A673 (cell line): ENCODE measurements at regions of chr6 and their contacts with region 1.

Region 1: DNA sequence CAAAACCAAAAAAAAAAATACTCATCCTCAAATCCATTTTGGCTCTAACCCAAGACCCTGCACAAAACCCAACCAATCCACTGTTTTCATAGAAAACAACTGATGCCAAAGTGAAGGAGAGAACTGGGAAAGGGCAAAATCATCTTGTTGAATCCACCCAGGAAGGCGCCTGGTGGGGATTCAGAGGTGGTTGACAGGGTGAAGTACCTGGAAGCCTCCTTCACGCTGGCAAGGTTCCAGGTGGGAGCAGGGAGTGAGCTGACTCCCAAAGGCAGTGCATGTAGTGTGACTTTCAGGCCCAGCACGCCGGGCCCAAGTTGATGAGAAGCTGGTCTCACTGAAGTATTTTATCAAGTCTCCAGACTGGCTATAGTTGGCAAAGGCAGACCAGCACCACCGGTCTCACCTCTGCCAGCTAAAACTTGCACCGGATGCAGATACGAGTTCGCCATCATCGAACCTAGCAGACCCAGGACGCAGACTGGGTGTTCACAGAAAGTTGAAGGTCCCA is 16.5 kb downstream of the PPP1R10 start:
- DNase-seq: no peak
- H3K4me3 ChIP-seq: no peak overlapping the region
- H3K27ac ChIP-seq: no peak overlapping the region
- H3K4me1 ChIP-seq: no peaks in the 10 kb centered on the region
- H3K27me3 ChIP-seq: no peaks in the 10 kb centered on the region
- CTCF ChIP-seq: no peak

Region 2: GRCh38 chr6:30234356-30234755 is 366.1 kb before region 1 on chr6:
- CTCF ChIA-PET with region 1: no interaction called
- POLR2A ChIA-PET with region 1: no interaction called
- intact Hi-C with region 1: no loop called
- DNase-seq: peak; percentile 7
- H3K4me3 ChIP-seq: no peak overlapping the region
- H3K27ac ChIP-seq: no peak overlapping the region
- H3K4me1 ChIP-seq: no peaks in the 10 kb centered on the region
- H3K27me3 ChIP-seq: peaks cover 20% of the 10 kb centered on the region
- CTCF ChIP-seq: no peak

Region 3: DNA sequence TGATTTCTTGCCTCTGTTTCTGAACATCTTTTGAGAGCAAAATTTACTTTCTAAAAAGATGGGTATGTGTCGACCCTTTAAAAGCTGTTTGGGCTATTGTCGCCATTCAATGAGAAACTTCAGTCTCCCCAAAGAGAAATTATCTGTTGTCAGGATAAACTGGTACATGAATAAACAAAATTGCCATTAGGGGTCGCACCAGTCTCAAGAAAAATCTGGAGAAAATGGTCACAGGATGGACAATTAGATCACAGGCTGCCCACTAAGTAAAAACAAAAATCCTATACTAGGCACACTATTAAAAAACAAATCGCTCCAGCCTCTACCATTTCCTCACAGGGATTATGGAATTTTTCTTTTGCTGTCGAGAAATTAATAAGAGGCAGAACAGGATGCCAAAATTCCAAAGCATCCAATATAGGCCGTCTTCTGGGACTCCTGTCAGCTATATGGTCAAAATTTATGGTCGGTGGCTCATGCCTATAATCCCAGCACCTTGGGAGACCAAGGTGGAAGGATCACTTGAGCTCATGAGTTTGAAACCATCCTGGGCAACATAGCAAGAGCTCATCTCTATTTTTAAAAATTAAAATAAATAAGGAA is 116.7 kb before region 1 on chr6:
- CTCF ChIA-PET with region 1: interaction called, 8 read pairs
- POLR2A ChIA-PET with region 1: no interaction called
- intact Hi-C with region 1: loop called (anchors 1 kb)
- DNase-seq: peak; percentile 69
- H3K4me3 ChIP-seq: no peak overlapping the region
- H3K27ac ChIP-seq: no peak overlapping the region
- H3K4me1 ChIP-seq: peaks cover 13% of the 10 kb centered on the region
- H3K27me3 ChIP-seq: peaks cover 35% of the 10 kb centered on the region
- CTCF ChIP-seq: peak; percentile 67

Region 4: DNA sequence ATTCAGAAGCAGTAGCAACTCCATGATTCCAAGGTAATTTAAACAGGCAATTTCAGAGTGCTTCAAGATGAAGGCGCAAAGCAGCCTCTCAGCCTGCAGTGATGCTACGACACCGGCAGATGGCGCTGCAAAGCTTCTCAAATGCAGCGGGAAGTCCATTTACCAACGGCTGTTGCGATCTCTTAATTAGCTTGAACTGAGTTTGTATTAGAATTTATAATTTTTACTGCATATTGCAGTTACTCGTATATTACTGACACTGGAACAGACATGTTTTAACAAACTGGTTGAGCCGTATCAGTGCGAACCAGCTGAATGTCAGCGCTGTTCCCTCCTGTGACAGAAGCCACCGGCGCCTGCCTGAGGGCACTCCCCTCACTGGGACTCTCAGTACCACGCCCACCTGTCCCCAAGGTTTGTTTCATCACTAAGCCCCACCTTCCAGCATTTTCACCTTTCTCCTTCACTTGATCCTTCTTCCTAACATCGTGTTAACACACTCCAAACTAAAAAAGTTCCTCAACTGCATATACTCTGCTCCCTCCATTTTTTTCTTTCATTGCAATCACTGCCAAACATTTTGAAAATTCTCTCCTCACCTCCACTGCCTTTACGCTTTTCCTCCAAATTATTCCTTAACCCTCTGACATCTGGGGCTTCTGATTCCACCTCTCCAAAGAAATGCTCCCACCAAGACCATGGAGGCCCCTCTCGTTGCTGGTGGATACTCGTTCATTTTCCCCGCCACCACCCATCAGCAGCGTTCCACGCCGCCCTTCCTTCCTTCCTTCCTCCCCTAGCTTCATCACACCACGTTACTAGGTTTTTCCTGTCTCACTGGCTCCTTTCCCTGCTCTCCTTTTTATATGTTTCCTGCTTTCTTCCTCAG is 58.7 kb before region 1 on chr6:
- CTCF ChIA-PET with region 1: interaction called, 3 read pairs
- POLR2A ChIA-PET with region 1: interaction called, 3 read pairs
- intact Hi-C with region 1: loop called (anchors 5 kb)
- DNase-seq: peak; percentile 85
- H3K4me3 ChIP-seq: peak overlapping the region; percentile 32
- H3K27ac ChIP-seq: no peak overlapping the region
- H3K4me1 ChIP-seq: peaks cover 4% of the 10 kb centered on the region
- H3K27me3 ChIP-seq: no peaks in the 10 kb centered on the region
- CTCF ChIP-seq: peak; percentile 99

Region 5: DNA sequence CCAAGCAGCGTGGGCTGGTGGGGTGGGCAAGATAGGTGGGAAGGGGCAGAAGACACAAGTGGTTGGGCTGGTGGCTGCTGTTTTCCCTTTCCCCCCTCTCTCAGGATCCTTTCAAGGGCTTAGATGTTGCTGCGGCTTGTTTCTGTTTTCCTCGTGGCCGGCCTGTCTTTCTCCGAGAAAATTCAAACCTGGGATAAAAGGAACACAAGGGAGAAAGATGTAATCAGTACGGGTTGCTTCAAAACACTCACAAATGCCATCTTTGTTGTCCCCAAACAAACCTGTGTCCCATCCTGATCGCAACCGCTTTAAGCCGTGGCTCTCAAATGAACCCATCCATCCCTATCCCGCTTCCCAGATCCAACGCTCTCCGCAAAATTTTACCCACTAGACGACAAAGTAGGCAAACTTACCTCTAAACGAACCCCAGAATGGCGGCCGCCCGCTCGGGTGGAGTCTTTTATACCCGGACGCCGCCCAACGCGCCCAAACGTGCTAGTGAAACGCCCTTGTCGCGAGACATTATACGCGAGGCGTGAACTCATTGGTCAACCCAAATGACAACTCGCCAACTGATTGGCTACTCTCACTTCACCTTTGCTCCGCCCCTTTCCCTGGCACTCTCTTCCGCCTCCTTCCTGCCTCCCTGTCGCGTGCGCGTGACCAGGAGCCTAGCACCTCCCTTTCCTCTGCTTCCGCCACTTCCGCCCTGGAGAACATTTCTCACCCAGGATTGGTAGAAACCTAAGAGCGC is 16.5 kb after region 1 on chr6 and contains the start of gene PPP1R10:
- CTCF ChIA-PET with region 1: no interaction called
- POLR2A ChIA-PET with region 1: interaction called, 12 read pairs
- intact Hi-C with region 1: no loop called
- DNase-seq: peak; percentile 100
- H3K4me3 ChIP-seq: peak within 1 kb of the TSS; percentile 81
- H3K27ac ChIP-seq: peak within 1 kb of the TSS; percentile 99
- H3K4me1 ChIP-seq: peaks cover 31% of the 10 kb centered on the region
- H3K27me3 ChIP-seq: no peaks in the 10 kb centered on the region
- CTCF ChIP-seq: no peak
- total RNA-seq, gene PPP1R10: 121 and 129 TPM in 2 replicates

Region 6: DNA sequence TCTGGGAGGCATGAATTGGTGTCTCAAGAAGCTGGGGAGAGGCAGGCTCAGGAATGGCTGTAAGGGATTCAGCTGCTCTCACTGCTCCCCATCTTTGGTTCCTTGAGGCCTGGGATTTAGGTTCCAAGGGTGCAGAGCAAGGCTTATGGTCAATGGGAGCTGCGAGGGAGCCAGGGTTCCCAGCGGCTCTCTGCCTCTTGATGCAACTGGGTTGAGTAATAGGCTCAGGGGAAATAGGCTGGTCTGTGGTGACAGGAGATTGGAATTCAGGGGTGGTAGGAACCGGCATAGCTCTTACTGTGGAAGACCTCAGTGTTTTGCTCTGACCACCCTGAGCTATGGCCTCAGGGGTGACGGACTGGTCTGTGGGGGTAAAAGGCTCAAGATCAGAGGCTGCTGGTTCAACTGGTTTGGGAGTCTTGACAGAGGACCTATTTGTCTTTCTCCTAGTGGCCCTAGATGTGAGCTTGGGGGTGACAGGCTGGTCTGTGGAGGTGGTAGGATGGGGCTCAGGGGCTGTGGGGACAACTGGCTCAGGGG is 103.4 kb after region 1 on chr6:
- CTCF ChIA-PET with region 1: no interaction called
- POLR2A ChIA-PET with region 1: interaction called, 28 read pairs
- intact Hi-C with region 1: no loop called
- DNase-seq: no peak
- H3K4me3 ChIP-seq: no peak overlapping the region
- H3K27ac ChIP-seq: no peak overlapping the region
- H3K4me1 ChIP-seq: peaks cover 5% of the 10 kb centered on the region
- H3K27me3 ChIP-seq: no peaks in the 10 kb centered on the region
- CTCF ChIP-seq: no peak